Body of pancreas (tissue), 4 donors: ENCODE measurements at regions of chr16 and their contacts with region 1.

Region 1: GRCh38 chr16:30458561-30459394 is 13.1 kb upstream of the SEPHS2 start:
- DNase-seq: peak in 2 of 4 donors; percentile 15 to 58
- ATAC-seq: no peak
- H3K4me3 ChIP-seq: no peak overlapping the region
- H3K27ac ChIP-seq: no peak overlapping the region
- H3K4me1 ChIP-seq: no peaks in the 10 kb centered on the region
- H3K27me3 ChIP-seq: no peaks in the 10 kb centered on the region
- CTCF ChIP-seq: no peak
- POLR2A ChIP-seq: no peak

Region 2: GRCh38 chr16:30510376-30510938 is 51.7 kb after region 1 on chr16:
- intact Hi-C with region 1: loop called (anchors 5 kb)
- DNase-seq: no peak
- ATAC-seq: no peak
- H3K4me3 ChIP-seq: no peak overlapping the region
- H3K27ac ChIP-seq: no peak overlapping the region
- H3K4me1 ChIP-seq: no peaks in the 10 kb centered on the region
- H3K27me3 ChIP-seq: no peaks in the 10 kb centered on the region
- CTCF ChIP-seq: no peak
- POLR2A ChIP-seq: no peak